ENCODE measurements at regions of chr5 and their contacts with region 1.

Region 1: GRCh38 chr5:15601274-15601673 is 101.3 kb downstream of the FBXL7 start:
- DNase-seq: peak in 2 of 10 donors; percentile 76 to 82

Region 2: GRCh38 chr5:15785531-15785981 is 184.3 kb after region 1 on chr5:
- intact Hi-C with region 1: loop called (anchors 10 kb)
- DNase-seq: peak in 3 of 10 donors; percentile 21 to 83 (median 40)